Calu3 (cell line): ENCODE measurements at regions of chr9 and their contacts with region 1.

Region 1: DNA sequence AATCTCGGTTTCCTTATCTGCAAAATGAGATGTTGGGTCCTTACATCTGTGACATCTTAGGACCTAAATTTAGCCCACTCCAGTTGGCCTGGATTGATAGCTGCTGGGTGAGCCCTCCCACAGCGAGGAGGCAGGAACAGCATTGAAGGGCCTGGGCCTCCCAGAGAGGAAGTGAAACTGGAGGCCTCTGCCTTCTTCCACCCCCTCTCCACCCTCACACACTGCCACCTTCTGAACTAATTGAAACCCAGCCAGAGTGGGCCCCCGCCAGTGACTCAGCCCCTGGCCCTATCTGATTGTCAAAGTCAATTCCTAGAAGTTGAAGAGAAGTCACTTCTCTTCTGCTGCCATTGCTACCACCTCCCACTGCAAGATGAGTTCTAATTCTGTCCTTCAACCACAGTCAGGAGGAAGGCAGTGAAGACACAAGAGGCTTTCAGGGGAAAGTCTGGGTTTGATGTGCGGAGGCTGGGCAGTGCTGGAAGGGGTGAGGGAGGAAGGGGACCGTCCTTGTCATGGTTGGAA is 55.2 kb upstream of the NEK6 start:
- DNase-seq: peak; percentile 12
- H3K4me3 Mint-ChIP-seq: no peak overlapping the region
- H3K27ac Mint-ChIP-seq: no peak overlapping the region
- H3K4me1 Mint-ChIP-seq: peaks cover 13% of the 10 kb centered on the region
- H3K27me3 Mint-ChIP-seq: peaks cover under 1% of the 10 kb centered on the region
- CTCF ChIP-seq: no peak

Region 2: DNA sequence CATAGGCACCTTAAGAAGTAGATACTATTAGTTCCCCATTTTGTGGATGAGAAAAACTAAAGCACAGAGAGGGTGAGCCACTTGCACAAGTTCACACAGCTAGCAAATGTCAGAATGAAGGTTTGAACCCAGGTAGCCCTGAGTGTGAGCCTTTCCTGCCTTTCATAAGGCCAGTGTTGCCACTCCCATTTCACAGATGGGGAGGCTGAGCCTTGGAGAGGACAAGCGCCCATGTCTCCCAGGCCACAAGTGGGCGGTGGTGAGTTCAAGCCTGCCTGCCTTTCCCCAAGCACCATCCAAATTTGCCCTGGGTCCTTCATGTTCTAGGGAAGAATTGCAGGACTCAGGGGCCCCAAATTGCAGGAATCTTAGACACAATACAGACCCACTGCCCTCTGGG is 140.3 kb before region 1 on chr9:
- CTCF ChIA-PET with region 1: no interaction called
- intact Hi-C with region 1: no loop called
- DNase-seq: no peak
- H3K4me3 Mint-ChIP-seq: no peak overlapping the region
- H3K27ac Mint-ChIP-seq: no peak overlapping the region
- H3K4me1 Mint-ChIP-seq: no peaks in the 10 kb centered on the region
- H3K27me3 Mint-ChIP-seq: peaks cover 42% of the 10 kb centered on the region
- CTCF ChIP-seq: no peak

Region 3: GRCh38 chr9:124342776-124343485 is 140.4 kb after region 1 on chr9:
- CTCF ChIA-PET with region 1: no interaction called
- intact Hi-C with region 1: no loop called
- DNase-seq: no peak
- H3K4me3 Mint-ChIP-seq: no peak overlapping the region
- H3K27ac Mint-ChIP-seq: no peak overlapping the region
- H3K4me1 Mint-ChIP-seq: no peaks in the 10 kb centered on the region
- H3K27me3 Mint-ChIP-seq: no peaks in the 10 kb centered on the region
- CTCF ChIP-seq: no peak

Region 4: GRCh38 chr9:124721109-124721906 is 518.8 kb after region 1 on chr9:
- CTCF ChIA-PET with region 1: interaction called, 10 read pairs
- intact Hi-C with region 1: no loop called
- DNase-seq: no peak
- H3K4me3 Mint-ChIP-seq: no peak overlapping the region
- H3K27ac Mint-ChIP-seq: no peak overlapping the region
- H3K4me1 Mint-ChIP-seq: no peaks in the 10 kb centered on the region
- H3K27me3 Mint-ChIP-seq: no peaks in the 10 kb centered on the region
- CTCF ChIP-seq: no peak